ENCODE measurements at regions of chr2 and their contacts with region 1.

Region 1: GRCh38 chr2:68487773-68488355 is 20.5 kb downstream of the APLF start:
- DNase-seq: no peak
- H3K4me3 Mint-ChIP-seq: no peak overlapping the region
- H3K27ac Mint-ChIP-seq: no peak overlapping the region
- H3K4me1 Mint-ChIP-seq: peaks cover 3% of the 10 kb centered on the region
- H3K27me3 Mint-ChIP-seq: no peaks in the 10 kb centered on the region

Region 2: DNA sequence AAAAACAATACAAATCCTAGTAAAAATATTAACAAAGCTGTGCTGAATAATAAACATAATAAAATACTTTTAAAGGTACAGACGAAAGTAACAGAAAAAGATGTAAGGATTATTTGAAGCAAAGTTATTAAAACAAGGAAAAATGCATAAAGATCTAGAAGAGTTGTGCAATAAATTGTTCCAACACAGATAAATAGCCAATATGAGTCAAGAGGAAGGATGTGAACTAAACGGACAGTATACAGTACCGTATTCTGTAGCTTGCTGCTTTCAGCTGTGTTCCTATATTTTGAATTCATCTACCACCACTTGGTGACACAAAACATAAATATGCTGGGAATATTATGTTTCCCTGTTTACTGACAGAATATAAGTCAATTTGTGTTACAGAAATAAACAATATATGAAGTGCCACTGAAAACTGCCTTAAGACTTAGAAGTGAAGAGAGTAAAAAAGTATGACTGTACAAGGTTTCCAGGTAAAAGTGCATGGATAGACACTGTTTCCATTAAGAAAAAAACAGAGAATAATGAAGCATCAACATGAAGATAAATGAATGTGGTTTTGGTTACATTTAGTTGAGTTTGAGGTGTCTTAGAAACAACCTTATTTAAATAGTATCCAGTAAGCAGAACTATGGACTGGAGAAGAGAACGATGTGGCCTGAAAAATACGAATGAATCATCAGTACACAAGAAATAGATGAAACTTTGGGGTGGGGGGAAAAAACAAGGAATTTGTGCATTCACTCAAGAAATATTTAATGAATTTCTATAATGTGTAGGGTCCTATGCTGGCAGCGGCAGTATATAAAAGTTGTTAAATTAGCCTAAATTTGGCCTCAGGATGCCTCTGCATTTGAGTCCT is 248.7 kb before region 1 on chr2:
- CTCF ChIA-PET with region 1: no interaction called
- DNase-seq: no peak
- H3K4me3 Mint-ChIP-seq: no peak overlapping the region
- H3K27ac Mint-ChIP-seq: no peak overlapping the region
- H3K4me1 Mint-ChIP-seq: peaks cover 35% of the 10 kb centered on the region
- H3K27me3 Mint-ChIP-seq: no peaks in the 10 kb centered on the region

Region 3: GRCh38 chr2:68434981-68435380 is 52.9 kb before region 1 on chr2:
- CTCF ChIA-PET with region 1: no interaction called
- DNase-seq: no peak
- H3K4me3 Mint-ChIP-seq: no peak overlapping the region
- H3K27ac Mint-ChIP-seq: no peak overlapping the region
- H3K4me1 Mint-ChIP-seq: peaks cover 3% of the 10 kb centered on the region
- H3K27me3 Mint-ChIP-seq: peaks cover 28% of the 10 kb centered on the region

Region 4: DNA sequence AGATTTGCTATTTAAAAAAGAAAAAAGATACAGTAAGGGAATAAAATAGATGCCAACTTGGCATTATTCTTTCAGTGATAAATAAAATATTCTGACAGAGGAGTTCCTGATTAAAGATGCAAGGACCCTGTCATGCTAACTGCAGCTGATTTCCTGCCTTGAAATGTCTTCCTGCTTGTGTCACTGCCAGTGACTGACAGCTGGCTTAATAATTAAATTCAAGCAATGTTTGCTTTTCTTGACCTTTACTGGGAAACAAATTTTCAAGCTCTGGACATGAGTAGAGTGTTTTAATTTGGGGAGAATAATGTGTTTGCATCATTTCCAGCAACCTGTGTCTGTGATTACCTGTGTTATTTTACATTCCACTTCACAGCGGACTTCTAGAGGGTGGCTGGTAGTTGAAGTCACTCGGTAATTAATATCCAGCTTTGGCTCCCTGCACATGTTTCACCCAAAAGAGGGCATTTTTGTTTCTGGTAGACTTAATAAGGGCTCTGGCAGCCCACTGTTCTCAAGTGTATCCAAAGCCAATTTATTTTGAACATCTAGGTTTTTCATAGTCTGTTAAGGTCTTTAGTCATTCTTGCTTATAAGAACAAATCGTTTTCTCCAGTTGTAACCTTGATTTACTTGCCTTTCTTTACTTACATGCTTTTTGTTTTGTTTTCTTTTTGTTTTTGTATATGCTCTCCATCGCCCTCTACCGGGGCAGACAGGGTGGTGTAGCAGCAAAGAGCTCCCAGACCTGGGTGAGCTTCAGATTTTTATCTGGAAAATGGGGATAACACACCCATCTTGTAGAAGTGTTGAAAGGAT is 107.0 kb after region 1 on chr2:
- CTCF ChIA-PET with region 1: interaction called, 17 read pairs
- DNase-seq: peak; percentile 65
- H3K4me3 Mint-ChIP-seq: no peak overlapping the region
- H3K27ac Mint-ChIP-seq: no peak overlapping the region
- H3K4me1 Mint-ChIP-seq: peaks cover 9% of the 10 kb centered on the region
- H3K27me3 Mint-ChIP-seq: peaks cover 18% of the 10 kb centered on the region

Region 5: DNA sequence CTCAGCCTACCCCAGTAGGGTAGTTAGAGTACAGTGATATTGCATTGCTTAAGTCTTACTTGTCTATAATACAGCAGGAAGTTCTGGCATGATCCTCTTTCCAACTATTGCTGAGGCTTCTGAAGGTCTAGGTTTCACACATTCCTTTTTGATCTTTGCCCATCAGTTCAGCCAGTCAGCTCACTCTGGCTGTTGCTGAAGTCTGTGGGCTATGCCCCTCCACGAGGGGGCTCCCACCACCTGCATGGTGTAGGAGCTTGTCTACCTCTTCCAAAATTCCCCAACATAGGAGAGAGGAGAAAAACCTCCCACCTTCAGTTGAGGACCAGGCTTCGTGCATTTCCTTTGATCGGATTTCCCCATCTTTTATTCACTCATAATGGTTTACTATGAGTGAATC is 181.8 kb after region 1 on chr2:
- CTCF ChIA-PET with region 1: no interaction called
- DNase-seq: no peak
- H3K4me3 Mint-ChIP-seq: no peak overlapping the region
- H3K27ac Mint-ChIP-seq: no peak overlapping the region
- H3K4me1 Mint-ChIP-seq: no peaks in the 10 kb centered on the region
- H3K27me3 Mint-ChIP-seq: peaks cover 41% of the 10 kb centered on the region

Region 6: DNA sequence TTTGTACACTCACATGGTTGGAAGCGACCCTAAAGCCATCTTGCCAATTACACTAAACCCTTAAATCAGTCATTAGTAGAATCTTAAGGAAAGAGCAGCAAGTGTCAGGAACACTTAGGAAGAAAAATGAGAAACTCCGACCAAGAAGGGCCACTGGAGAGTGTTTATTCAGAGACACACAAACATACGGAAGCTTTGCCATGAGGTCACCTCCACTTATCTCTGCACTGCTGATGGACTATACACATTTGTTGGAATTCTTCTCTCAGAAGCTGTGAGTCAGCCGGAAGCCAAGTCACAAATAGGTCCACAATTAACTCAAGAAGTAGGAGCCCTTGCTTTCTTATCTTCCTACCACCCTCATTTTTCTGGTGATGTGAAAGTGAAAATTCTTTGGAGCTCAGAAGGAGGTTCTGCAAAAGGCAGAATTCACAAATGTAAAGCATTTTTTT is 361.7 kb after region 1 on chr2:
- CTCF ChIA-PET with region 1: no interaction called
- DNase-seq: no peak
- H3K4me3 Mint-ChIP-seq: no peak overlapping the region
- H3K27ac Mint-ChIP-seq: no peak overlapping the region
- H3K4me1 Mint-ChIP-seq: no peaks in the 10 kb centered on the region
- H3K27me3 Mint-ChIP-seq: peaks cover 45% of the 10 kb centered on the region

Measured in activated naive CD4-positive, alpha-beta T cell treated with anti-CD3 and anti-CD28 coated beads, Interleukin-2, amount 10 ng/mL, durations not matched to agents 7 days and 5 days (primary cell).